ENCODE measurements at regions of chr3 and their contacts with region 1.

Region 1: DNA sequence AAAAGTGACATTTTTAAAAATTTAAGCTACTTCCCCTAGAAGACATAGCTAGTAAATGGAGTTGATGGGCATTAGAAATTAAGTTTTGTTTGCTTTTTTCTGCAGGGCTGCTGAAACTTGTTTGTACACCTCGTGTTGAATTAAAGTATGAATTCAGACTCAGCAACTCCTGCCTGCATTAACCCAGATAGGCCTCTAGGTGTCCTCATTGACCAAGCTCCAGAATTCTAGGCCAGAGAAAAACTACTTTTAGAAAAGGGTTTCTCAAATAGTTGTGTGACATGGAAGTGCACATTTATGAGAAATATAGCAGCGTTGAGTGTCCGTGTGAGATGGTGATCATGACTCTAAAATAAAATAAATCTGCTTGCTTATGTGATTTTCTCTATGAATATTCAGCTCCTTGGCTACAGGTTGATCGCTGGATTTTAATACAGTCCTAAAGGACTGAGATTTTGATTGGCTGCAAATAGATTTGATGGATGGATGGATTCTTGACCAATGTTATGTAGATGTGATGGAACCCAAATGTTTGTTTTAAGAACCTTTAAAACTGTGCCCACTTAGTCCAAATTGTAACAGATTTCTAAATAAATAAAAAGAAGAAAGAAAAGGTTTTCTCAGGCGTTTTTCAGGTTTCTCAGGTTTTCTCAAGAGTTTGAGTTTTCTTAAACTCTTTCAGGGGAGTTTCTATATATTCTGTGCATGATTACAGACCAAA is 39.4 kb upstream of the LMOD3 start:
- DNase-seq: no peak
- H3K4me3 ChIP-seq: no peak overlapping the region
- H3K27ac ChIP-seq: no peak overlapping the region
- H3K4me1 ChIP-seq: no peaks in the 10 kb centered on the region
- H3K27me3 ChIP-seq: no peaks in the 10 kb centered on the region
- CTCF ChIP-seq: peak; percentile 95

Region 2: GRCh38 chr3:68809596-68809995 is 352.2 kb before region 1 on chr3:
- intact Hi-C with region 1: no loop called
- DNase-seq: no peak
- H3K4me3 ChIP-seq: no peak overlapping the region
- H3K27ac ChIP-seq: no peak overlapping the region
- H3K4me1 ChIP-seq: no peaks in the 10 kb centered on the region
- H3K27me3 ChIP-seq: no peaks in the 10 kb centered on the region
- CTCF ChIP-seq: no peak

Region 3: GRCh38 chr3:68866157-68866556 is 295.6 kb before region 1 on chr3:
- intact Hi-C with region 1: no loop called
- DNase-seq: no peak
- H3K4me3 ChIP-seq: no peak overlapping the region
- H3K27ac ChIP-seq: no peak overlapping the region
- H3K4me1 ChIP-seq: no peaks in the 10 kb centered on the region
- H3K27me3 ChIP-seq: peaks cover 20% of the 10 kb centered on the region
- CTCF ChIP-seq: no peak

Region 4: GRCh38 chr3:68953816-68954444 is 207.8 kb before region 1 on chr3:
- intact Hi-C with region 1: no loop called
- DNase-seq: no peak
- H3K4me3 ChIP-seq: no peak overlapping the region
- H3K27ac ChIP-seq: no peak overlapping the region
- H3K4me1 ChIP-seq: peaks cover 5% of the 10 kb centered on the region
- H3K27me3 ChIP-seq: peaks cover 26% of the 10 kb centered on the region
- CTCF ChIP-seq: no peak

Region 5: GRCh38 chr3:69306239-69307185 is 144.8 kb after region 1 on chr3:
- intact Hi-C with region 1: loop called (anchors 5 kb)
- DNase-seq: peak; percentile 48
- H3K4me3 ChIP-seq: no peak overlapping the region
- H3K27ac ChIP-seq: peak overlapping the region; percentile 62
- H3K4me1 ChIP-seq: peaks cover 8% of the 10 kb centered on the region
- H3K27me3 ChIP-seq: no peaks in the 10 kb centered on the region
- CTCF ChIP-seq: peak; percentile 95

Region 6: GRCh38 chr3:69425261-69425660 is 263.5 kb after region 1 on chr3:
- intact Hi-C with region 1: loop called (anchors 10 kb)
- DNase-seq: no peak
- H3K4me3 ChIP-seq: no peak overlapping the region
- H3K27ac ChIP-seq: no peak overlapping the region
- H3K4me1 ChIP-seq: peaks cover 19% of the 10 kb centered on the region
- H3K27me3 ChIP-seq: no peaks in the 10 kb centered on the region
- CTCF ChIP-seq: peak; percentile 70

Region 7: GRCh38 chr3:69671082-69671952 is 509.6 kb after region 1 on chr3:
- intact Hi-C with region 1: loop called (anchors 5 kb)
- DNase-seq: peak; percentile 24
- H3K4me3 ChIP-seq: no peak overlapping the region
- H3K27ac ChIP-seq: no peak overlapping the region
- H3K4me1 ChIP-seq: peaks cover 10% of the 10 kb centered on the region
- H3K27me3 ChIP-seq: no peaks in the 10 kb centered on the region
- CTCF ChIP-seq: peak; percentile 87